ENCODE measurements at regions of chr5 and their contacts with region 1.

Region 1: DNA sequence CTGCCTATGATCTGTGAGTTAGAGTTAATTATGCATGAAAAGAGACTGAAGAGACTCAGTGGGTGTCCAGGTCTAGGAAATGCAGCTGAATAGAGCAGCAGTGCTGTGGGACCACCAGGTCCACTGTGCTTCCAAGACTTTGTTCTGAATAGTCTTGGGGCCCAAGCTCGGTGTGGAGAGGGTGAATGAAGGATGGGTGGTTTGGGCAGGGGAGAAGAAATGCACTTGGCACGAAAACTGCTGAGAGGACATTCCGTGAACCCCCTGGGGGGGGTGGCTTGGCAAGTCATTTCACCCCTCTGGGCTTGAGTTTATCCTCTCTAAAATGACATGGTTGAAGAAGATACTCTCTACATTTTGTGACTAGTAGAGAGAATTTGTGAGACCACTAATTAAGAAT is 36.0 kb upstream of the GOLPH3 start:
- DNase-seq: no peak
- H3K4me3 Mint-ChIP-seq: no peak overlapping the region
- H3K27ac Mint-ChIP-seq: peak overlapping the region; percentile 91
- H3K4me1 Mint-ChIP-seq: peaks cover 19% of the 10 kb centered on the region
- H3K27me3 Mint-ChIP-seq: no peaks in the 10 kb centered on the region

Region 2: DNA sequence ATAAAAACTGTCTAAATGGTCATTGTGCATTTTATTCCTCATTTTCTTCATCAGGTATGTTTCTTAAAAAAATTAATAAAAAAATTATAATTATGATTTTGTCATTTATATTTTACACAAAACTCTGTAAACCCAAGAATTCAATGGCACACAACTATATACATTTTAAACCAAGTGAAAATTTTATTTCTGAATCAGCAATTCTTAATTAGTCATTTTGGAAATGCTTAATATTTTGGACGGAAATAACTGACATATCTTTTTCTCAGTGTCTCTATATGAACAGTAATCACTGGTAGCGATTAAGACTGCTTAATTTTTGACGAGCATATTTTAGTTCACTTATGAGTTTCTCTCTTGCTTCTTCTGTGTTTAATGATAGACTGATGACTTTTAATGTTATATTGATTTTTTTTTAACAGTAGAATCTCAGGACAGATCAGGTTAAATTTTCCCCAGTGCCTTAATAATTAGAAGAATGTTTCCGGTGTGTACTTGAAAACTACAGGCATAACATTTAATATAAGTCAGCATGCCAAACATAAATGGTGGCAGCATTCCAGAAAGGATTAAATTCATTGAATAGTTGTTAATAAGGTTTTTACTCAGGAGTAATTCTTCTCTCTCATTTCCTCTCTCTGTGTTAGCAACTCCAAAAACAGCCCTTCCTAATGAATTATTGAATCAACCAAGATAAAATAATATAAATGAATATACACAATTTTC is 1661.4 kb before region 1 on chr5:
- CTCF ChIA-PET with region 1: no interaction called
- intact Hi-C with region 1: no loop called
- DNase-seq: no peak
- H3K4me3 Mint-ChIP-seq: no peak overlapping the region
- H3K27ac Mint-ChIP-seq: no peak overlapping the region
- H3K4me1 Mint-ChIP-seq: no peaks in the 10 kb centered on the region
- H3K27me3 Mint-ChIP-seq: no peaks in the 10 kb centered on the region

Region 3: DNA sequence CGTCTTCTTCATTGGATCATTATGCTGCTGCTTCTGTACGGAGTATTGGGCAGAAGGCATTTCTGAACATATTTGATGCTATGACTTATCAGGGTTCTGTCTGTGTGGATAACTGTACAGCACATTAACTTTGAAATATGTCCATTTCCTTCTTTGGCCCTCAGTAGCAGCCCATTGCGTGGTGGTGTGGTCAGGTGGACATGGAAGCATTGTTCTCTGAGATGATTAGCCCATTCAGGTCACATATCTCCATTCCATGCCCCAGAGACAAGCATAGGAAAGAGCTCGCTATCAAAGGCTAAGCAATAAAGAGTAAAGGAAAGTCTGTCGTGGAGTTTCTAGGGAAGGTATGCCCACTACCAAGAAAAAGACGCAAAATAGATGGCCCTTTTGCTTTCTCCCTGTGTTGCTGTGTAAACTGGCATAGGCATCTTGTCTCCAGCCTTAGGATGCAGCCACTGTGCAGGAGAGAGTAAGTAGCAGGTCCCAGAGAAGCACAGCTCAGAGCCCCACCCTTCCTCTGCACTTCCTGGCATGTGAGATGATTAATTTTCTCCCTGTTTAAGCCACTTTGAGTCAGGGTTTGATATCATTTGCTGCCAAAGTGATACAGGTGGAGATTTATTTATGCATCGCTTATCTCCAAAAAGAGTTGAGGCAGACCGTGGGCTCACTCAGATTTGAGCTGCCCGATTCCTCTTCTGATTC is 349.3 kb before region 1 on chr5:
- CTCF ChIA-PET with region 1: no interaction called
- intact Hi-C with region 1: loop called (anchors 2 kb)
- DNase-seq: peak; percentile 55
- H3K4me3 Mint-ChIP-seq: no peak overlapping the region
- H3K27ac Mint-ChIP-seq: peak overlapping the region; percentile 59
- H3K4me1 Mint-ChIP-seq: peaks cover 29% of the 10 kb centered on the region
- H3K27me3 Mint-ChIP-seq: peaks cover 3% of the 10 kb centered on the region

Region 4: DNA sequence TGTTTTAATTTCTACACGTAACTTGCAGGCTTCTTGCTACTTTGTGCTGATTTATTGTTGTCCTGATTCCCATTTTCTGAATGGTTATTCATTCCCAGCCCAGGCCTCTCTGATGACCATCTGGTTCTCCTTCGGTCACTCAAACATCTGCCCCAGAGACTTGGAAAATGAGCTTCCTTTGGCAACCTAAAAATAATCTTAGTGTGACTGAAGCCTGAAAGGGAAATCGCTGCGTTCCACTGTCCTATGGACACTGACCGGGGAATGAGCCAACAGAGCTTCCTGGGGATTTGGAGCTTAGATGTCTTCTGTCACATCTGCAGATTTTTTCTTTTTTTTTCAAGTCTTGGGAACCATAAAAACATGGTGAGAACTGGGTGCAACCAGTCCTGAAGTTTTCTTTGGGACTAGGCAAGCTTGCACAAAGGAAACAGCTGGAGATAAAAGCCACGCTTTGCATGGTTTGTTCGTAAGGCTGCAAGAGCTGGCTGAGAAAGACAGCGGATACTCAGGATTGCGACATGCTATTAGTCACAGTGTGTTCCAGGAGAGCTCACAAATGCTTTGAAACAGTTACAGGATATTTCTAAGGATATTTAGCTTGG is 182.3 kb before region 1 on chr5:
- CTCF ChIA-PET with region 1: no interaction called
- intact Hi-C with region 1: loop called (anchors 5 kb)
- DNase-seq: no peak
- H3K4me3 Mint-ChIP-seq: no peak overlapping the region
- H3K27ac Mint-ChIP-seq: no peak overlapping the region
- H3K4me1 Mint-ChIP-seq: peaks cover 6% of the 10 kb centered on the region
- H3K27me3 Mint-ChIP-seq: no peaks in the 10 kb centered on the region

Region 5: GRCh38 chr5:32115985-32116384 is 94.2 kb before region 1 on chr5:
- CTCF ChIA-PET with region 1: no interaction called
- intact Hi-C with region 1: loop called (anchors 5 kb)
- DNase-seq: no peak
- H3K4me3 Mint-ChIP-seq: no peak overlapping the region
- H3K27ac Mint-ChIP-seq: peak overlapping the region; percentile 56
- H3K4me1 Mint-ChIP-seq: peaks cover 34% of the 10 kb centered on the region
- H3K27me3 Mint-ChIP-seq: no peaks in the 10 kb centered on the region

Region 6: GRCh38 chr5:32249646-32250045 is 39.5 kb after region 1 on chr5:
- CTCF ChIA-PET with region 1: no interaction called
- intact Hi-C with region 1: no loop called
- DNase-seq: no peak
- H3K4me3 Mint-ChIP-seq: no peak overlapping the region
- H3K27ac Mint-ChIP-seq: no peak overlapping the region
- H3K4me1 Mint-ChIP-seq: no peaks in the 10 kb centered on the region
- H3K27me3 Mint-ChIP-seq: no peaks in the 10 kb centered on the region

Region 7: DNA sequence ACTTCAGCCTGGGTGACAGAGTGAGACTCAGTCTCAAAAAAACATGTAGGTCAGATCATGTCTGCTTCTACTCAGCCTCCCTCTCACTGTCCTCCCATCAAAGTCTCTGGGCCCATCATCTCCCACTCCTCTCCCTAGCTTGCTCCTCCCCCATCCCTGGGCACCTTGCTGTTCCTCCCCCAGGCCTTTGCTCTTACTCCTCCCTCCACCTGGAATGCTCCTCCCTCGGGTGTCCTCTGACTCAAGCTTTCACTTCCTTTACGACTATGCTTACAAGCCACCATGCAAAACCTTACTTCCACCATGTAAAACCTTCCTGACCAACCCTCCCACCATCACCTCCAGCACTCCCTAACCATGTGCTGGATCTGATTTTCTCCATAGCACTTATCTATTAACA is 51.0 kb after region 1 on chr5:
- CTCF ChIA-PET with region 1: no interaction called
- intact Hi-C with region 1: no loop called
- DNase-seq: peak; percentile 54
- H3K4me3 Mint-ChIP-seq: no peak overlapping the region
- H3K27ac Mint-ChIP-seq: peak overlapping the region; percentile 74
- H3K4me1 Mint-ChIP-seq: peaks cover 12% of the 10 kb centered on the region
- H3K27me3 Mint-ChIP-seq: no peaks in the 10 kb centered on the region

Region 8: GRCh38 chr5:32276173-32276853 is 66.2 kb after region 1 on chr5:
- CTCF ChIA-PET with region 1: no interaction called
- intact Hi-C with region 1: loop called (anchors 2 kb)
- DNase-seq: no peak
- H3K4me3 Mint-ChIP-seq: no peak overlapping the region
- H3K27ac Mint-ChIP-seq: peak overlapping the region; percentile 77
- H3K4me1 Mint-ChIP-seq: peaks cover 52% of the 10 kb centered on the region
- H3K27me3 Mint-ChIP-seq: no peaks in the 10 kb centered on the region

Region 9: GRCh38 chr5:32339198-32339597 is 129.0 kb after region 1 on chr5:
- CTCF ChIA-PET with region 1: no interaction called
- intact Hi-C with region 1: no loop called
- DNase-seq: no peak
- H3K4me3 Mint-ChIP-seq: no peak overlapping the region
- H3K27ac Mint-ChIP-seq: no peak overlapping the region
- H3K4me1 Mint-ChIP-seq: no peaks in the 10 kb centered on the region
- H3K27me3 Mint-ChIP-seq: peaks cover 3% of the 10 kb centered on the region